Naive thymus-derived CD4-positive, alpha-beta T cell (primary cell): ENCODE measurements at regions of chr10 and their contacts with region 1.

Region 1: GRCh38 chr10:113854011-113854760 is at the starts of genes DCLRE1A and NHLRC2:
- DNase-seq: peak; percentile 26 to 55 (median 50)
- ATAC-seq: peak; percentile 73
- H3K4me3 ChIP-seq: peak within 1 kb of the TSS; percentile 90
- H3K4me3 Mint-ChIP-seq: peak within 1 kb of the TSS; percentile 90 to 100 (median 97)
- H3K27ac ChIP-seq: peak within 1 kb of the TSS; percentile 79
- H3K27ac Mint-ChIP-seq: peak within 1 kb of the TSS; percentile 89 to 100 (median 97)
- H3K4me1 ChIP-seq: peaks cover 3 to 42% of the 10 kb centered on the region in 2 donors
- H3K4me1 Mint-ChIP-seq: peaks cover 24 to 60% (median 52%) of the 10 kb centered on the region in 7 donors
- H3K27me3 ChIP-seq: no peaks in the 10 kb centered on the region
- H3K27me3 Mint-ChIP-seq: no peaks in the 10 kb centered on the region
- total RNA-seq, gene DCLRE1A: 1.5 to 12.9 (median 4.3) TPM
- total RNA-seq, gene NHLRC2: 10.3 to 25.9 (median 20.5) TPM

Region 2: DNA sequence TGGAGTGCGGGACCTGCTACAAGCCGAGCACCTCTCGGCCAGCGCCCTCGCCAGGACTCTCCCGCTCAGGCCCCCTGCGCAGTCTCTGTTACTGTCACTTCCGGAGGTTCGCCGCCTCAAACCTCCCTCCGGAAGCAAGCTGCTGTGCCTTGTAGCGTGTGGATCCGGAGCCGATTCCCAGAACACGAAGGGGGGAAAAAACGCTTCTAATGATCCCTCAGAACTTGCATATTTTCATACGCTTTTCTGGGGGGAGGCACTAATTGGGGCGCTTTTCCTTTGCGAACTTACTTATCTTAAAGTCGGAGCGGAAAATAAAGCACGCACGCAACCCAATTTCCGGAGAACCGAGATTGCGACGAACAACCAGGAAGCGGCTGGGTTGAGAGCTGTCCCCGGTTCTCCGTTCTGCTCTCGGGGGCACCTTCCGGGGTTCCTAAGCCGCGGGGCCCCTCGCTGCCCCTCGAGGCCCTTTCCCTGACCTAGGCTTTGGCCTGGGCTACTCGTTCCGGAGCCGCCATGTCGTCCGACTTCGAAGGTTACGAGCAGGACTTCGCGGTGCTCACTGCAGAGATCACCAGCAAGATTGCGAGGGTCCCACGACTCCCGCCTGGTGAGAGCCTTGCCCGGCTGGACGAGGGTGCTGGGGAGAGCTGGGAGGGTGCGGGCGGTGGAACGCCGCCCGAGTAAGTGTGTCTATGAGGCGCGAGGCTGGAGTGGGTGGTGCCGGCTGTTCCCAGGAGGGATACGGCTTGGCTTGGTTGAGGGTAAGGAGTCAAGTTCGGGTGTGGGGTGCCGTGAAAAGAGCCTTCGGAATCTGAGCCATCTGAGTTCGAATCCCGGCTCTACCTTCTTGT is 1407.1 kb before region 1 on chr10 and contains the starts of genes VTI1A and ZDHHC6:
- CTCF ChIA-PET with region 1: no interaction called
- POLR2A ChIA-PET with region 1: no interaction called
- intact Hi-C with region 1: loop called (anchors 10 kb)
- DNase-seq: peak; percentile 70 to 89 (median 84)
- ATAC-seq: peak; percentile 95
- H3K4me3 ChIP-seq: peak within 1 kb of the TSS; percentile 85
- H3K4me3 Mint-ChIP-seq: peak within 1 kb of the TSS; percentile 92 to 100 (median 96)
- H3K27ac ChIP-seq: peak within 1 kb of the TSS; percentile 90
- H3K27ac Mint-ChIP-seq: peak within 1 kb of the TSS; percentile 95 to 100 (median 99)
- H3K4me1 ChIP-seq: peaks cover 23 to 25% of the 10 kb centered on the region in 2 donors
- H3K4me1 Mint-ChIP-seq: peaks cover 31 to 81% (median 65%) of the 10 kb centered on the region in 7 donors
- H3K27me3 ChIP-seq: no peaks in the 10 kb centered on the region
- H3K27me3 Mint-ChIP-seq: no peaks in the 10 kb centered on the region
- total RNA-seq, gene VTI1A: 40.2 to 56.8 (median 51.4) TPM
- total RNA-seq, gene ZDHHC6: 34.3 to 66.3 (median 50.9) TPM

Region 3: DNA sequence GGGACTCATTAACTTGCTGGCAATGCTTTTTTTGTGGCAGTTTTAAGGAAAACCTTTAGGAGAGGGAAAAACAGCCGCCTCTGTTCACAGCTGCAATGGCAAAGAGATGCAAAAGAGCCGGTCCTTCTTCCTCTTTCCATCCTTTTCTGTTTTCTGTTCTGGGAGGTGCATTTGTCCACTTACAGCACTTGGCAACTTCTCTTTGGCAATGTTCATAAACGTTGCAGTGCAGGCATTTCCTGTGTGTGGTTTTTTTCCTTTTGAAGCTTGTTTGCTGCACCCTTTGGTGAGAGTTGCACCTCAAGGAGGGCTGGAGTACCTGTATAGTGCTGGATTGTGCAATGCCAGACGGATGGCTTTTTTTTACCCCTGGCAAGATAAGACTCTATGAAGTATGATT is 355.2 kb before region 1 on chr10:
- CTCF ChIA-PET with region 1: no interaction called
- POLR2A ChIA-PET with region 1: no interaction called
- intact Hi-C with region 1: no loop called
- DNase-seq: no peak
- ATAC-seq: peak; percentile 20
- H3K4me3 ChIP-seq: no peak overlapping the region
- H3K4me3 Mint-ChIP-seq: no peak overlapping the region
- H3K27ac ChIP-seq: no peak overlapping the region
- H3K27ac Mint-ChIP-seq: no peak overlapping the region
- H3K4me1 ChIP-seq: no peaks in the 10 kb centered on the region
- H3K4me1 Mint-ChIP-seq: peaks cover 0 to 4% (median 0%) of the 10 kb centered on the region in 7 donors
- H3K27me3 ChIP-seq: no peaks in the 10 kb centered on the region
- H3K27me3 Mint-ChIP-seq: peaks cover 5 to 39% (median 21%) of the 10 kb centered on the region in 5 donors

Region 4: GRCh38 chr10:114043532-114044246 is 189.5 kb after region 1 on chr10 and contains the start of gene ADRB1:
- CTCF ChIA-PET with region 1: no interaction called
- POLR2A ChIA-PET with region 1: no interaction called
- intact Hi-C with region 1: loop called in 1 of 2 experiments (anchors 5 kb)
- DNase-seq: peak in 4 of 9 donors; percentile 2 to 41 (median 16)
- ATAC-seq: peak; percentile 64
- H3K4me3 ChIP-seq: peak within 1 kb of the TSS; percentile 30
- H3K4me3 Mint-ChIP-seq: peak within 1 kb of the TSS; percentile 68 to 84 (median 80)
- H3K27ac ChIP-seq: no peak within 1 kb of the TSS
- H3K27ac Mint-ChIP-seq: peak within 1 kb of the TSS in 2 of 9 donors; percentile 28 to 70
- H3K4me1 ChIP-seq: peaks cover 0 to 8% of the 10 kb centered on the region in 2 donors
- H3K4me1 Mint-ChIP-seq: peaks cover 14 to 27% (median 20%) of the 10 kb centered on the region in 7 donors
- H3K27me3 ChIP-seq: peaks cover 2 to 6% of the 10 kb centered on the region in 2 donors
- H3K27me3 Mint-ChIP-seq: peaks cover 52 to 87% (median 74%) of the 10 kb centered on the region in 5 donors
- total RNA-seq, gene ADRB1: 0.29 to 0.64 TPM in 2 of 5 experiments, not detected in the others

Region 5: DNA sequence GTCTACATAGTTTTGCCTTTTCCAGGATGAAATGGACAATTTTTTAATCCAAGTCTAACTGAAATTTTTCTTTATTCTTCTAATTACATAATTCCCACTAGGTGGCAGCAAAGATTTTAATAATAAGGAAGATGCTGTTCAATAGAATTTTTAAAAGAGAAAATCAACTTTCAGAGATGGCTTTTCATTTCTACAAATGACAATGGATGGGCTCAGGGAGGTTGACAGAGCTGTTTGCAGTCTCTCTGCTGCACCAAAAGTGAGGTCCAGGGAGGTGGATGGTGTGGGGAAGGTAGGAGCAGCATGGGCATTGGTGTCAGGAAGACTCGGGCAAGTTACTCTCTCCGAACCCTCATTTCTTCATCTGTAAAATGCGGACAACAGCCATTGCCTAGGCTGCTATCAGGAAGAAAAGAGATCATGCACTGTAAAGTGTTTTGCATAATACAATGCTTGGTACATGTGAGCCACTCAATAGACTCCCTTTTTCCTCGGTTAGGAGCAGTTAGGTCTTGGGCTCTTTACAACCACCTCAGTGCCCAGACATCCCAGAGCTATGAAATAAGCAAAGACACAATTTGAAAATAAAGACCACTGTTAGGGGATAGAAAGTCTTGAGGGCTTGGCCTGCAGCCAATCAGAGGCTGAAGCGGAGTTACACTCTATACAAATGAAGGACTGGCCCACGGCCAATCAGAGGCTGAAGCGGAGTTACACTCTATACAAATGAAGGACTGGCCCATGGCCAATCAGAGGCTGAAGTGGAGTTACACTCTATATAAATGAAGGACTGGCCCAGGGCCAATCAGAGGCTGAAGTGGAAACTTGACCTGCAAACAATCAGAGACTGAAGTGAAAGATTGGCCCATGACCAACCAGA is 696.8 kb after region 1 on chr10:
- CTCF ChIA-PET with region 1: no interaction called
- POLR2A ChIA-PET with region 1: no interaction called
- intact Hi-C with region 1: loop called in 1 of 2 experiments (anchors 10 kb)
- DNase-seq: peak in 5 of 9 donors; percentile 33 to 50 (median 40)
- ATAC-seq: peak; percentile 26
- H3K4me3 ChIP-seq: no peak overlapping the region
- H3K4me3 Mint-ChIP-seq: no peak overlapping the region
- H3K27ac ChIP-seq: no peak overlapping the region
- H3K27ac Mint-ChIP-seq: peak overlapping the region in 5 of 9 donors; percentile 1 to 61 (median 20)
- H3K4me1 ChIP-seq: peaks cover 6 to 29% of the 10 kb centered on the region in 2 donors
- H3K4me1 Mint-ChIP-seq: peaks cover 16 to 37% (median 33%) of the 10 kb centered on the region in 7 donors
- H3K27me3 ChIP-seq: no peaks in the 10 kb centered on the region
- H3K27me3 Mint-ChIP-seq: peaks cover 0 to 5% (median 0%) of the 10 kb centered on the region in 5 donors